Activated naive CD4-positive, alpha-beta T cell treated with anti-CD3 and anti-CD28 coated beads for 36 hours (primary cell): ENCODE measurements at regions of chr14 and their contacts with region 1.

Region 1: GRCh38 chr14:54566410-54567223 is at the start of gene SAMD4A:
- DNase-seq: peak; percentile 75
- H3K4me3 Mint-ChIP-seq: peak within 1 kb of the TSS; percentile 94
- H3K27ac Mint-ChIP-seq: peak within 1 kb of the TSS; percentile 79
- H3K4me1 Mint-ChIP-seq: peaks cover 26% of the 10 kb centered on the region
- H3K27me3 Mint-ChIP-seq: no peaks in the 10 kb centered on the region
- total RNA-seq, gene SAMD4A: 4.7 to 4.9 TPM

Region 2: GRCh38 chr14:54396493-54397335 is 169.9 kb before region 1 on chr14 and contains the start of gene CDKN3:
- CTCF ChIA-PET with region 1: no interaction called
- intact Hi-C with region 1: loop called (anchors 1 kb)
- DNase-seq: peak; percentile 99
- H3K4me3 Mint-ChIP-seq: peak within 1 kb of the TSS; percentile 86
- H3K27ac Mint-ChIP-seq: peak within 1 kb of the TSS; percentile 65
- H3K4me1 Mint-ChIP-seq: peaks cover 8% of the 10 kb centered on the region
- H3K27me3 Mint-ChIP-seq: peaks cover 2% of the 10 kb centered on the region
- total RNA-seq, gene CDKN3: 96.5 to 101 TPM

Region 3: DNA sequence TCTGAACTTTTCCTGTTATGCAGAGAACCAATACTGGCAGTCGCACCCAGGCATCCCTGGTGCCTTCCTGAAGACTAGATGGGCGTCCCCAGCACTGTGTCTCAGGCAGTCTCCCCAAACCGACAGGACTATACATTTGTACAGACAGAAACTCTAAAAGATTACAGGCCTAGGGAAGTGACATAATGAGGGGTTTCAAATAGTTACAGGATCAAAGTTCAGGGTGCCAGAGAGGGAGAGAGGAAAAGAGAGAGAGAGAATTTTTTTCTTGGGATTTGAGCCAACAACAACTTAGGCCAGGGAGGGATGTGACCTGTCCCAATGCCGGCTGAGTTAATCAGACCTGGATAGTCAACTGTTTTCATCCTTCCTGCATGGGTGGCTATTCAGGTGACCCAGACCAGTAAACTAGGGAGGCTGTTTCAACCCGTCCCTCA is 68.5 kb before region 1 on chr14:
- CTCF ChIA-PET with region 1: no interaction called
- intact Hi-C with region 1: no loop called
- DNase-seq: no peak
- H3K4me3 Mint-ChIP-seq: no peak overlapping the region
- H3K27ac Mint-ChIP-seq: no peak overlapping the region
- H3K4me1 Mint-ChIP-seq: peaks cover 2% of the 10 kb centered on the region
- H3K27me3 Mint-ChIP-seq: peaks cover 9% of the 10 kb centered on the region

Region 4: DNA sequence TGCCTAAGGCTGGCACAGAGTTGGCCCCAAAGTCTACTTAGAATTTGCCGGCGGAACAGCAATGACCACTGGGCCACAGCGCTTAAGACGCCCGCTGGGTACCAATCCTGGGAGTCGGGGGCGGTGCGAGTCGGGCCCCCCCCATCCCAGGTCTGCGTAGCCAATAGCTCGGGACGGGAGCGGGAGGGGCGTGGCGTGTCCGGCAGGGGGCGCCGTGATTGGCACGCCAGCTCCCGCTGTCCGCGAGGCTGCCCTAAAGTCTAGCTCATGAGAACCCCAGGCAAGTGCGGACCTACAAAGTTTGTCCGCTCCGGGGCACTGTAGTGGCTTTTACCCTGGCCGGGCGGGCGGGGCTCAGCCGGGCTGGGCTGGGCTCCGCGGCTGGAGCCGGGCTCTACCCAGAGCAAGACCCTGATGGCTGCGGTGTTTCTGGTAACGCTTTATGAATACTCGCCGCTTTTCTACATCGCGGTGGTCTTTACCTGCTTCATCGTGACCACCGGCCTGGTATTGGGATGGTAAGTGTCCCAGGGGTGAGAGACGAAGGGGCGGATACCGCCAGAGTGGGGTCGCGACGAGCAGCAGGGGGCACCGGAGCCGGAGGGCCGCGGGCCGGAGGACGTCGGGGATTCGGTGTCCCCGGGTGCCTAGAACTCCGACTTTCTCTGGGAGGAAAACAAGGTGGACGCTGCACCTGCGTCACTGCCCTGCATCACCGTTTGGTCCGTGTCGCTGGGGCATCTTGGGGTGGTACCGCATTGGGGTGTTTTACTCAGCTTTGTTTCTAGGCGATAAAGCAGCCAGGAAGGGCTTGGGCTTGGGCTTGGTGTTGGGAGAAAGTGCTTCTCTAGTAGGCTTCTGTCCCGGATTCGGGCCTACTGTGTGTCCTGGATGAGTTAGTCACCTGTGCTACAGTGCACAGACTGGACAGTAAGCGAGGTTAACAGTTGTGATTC is 56.8 kb before region 1 on chr14 and contains the start of gene CGRRF1:
- CTCF ChIA-PET with region 1: interaction called, 4 read pairs
- intact Hi-C with region 1: loop called (anchors 1 kb)
- DNase-seq: peak; percentile 98
- H3K4me3 Mint-ChIP-seq: peak within 1 kb of the TSS; percentile 86
- H3K27ac Mint-ChIP-seq: peak within 1 kb of the TSS; percentile 52
- H3K4me1 Mint-ChIP-seq: peaks cover 41% of the 10 kb centered on the region
- H3K27me3 Mint-ChIP-seq: no peaks in the 10 kb centered on the region
- total RNA-seq, gene CGRRF1: 9.2 to 9.7 TPM

Region 5: DNA sequence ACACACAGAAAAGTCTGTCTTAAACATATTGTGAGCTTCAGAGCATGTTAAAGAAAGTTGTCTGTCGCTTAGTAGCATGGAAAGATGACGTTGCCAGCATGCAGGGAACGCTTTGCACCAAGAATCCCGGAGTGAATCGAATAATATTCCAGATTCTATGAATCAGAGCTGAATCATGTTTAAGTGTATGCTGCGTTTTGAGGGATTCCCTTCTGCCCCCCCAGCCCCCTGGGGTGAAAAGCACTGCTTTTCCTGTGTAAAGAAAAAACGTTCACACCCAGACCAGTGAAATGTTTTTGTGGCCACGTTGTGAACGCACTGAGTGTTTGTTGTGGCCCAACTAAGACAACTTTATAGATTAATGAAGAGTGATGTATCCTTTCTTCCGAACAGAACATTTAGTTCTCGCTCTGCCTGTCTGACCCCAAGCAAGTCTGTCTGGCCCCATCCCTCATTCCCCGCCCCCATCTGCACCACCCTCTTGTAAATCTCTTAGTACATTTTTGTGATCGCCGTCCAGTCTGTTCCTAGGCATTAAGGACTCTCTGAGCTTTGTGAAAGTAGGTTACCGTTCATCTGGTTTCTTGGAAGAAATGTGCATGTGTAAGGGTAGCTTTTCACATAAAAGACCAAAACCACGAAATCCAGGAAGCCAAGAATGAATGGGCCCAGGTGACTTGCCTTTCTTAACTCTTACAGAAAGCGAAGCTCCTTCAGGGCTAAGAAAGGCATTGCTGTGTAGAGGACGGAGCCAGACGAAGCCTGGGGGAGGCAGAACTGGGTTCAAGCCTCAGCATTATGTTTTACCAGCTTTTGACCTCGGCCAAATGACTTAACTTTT is 103.3 kb after region 1 on chr14:
- CTCF ChIA-PET with region 1: interaction called, 14 read pairs
- intact Hi-C with region 1: no loop called
- DNase-seq: peak; percentile 51
- H3K4me3 Mint-ChIP-seq: no peak overlapping the region
- H3K27ac Mint-ChIP-seq: no peak overlapping the region
- H3K4me1 Mint-ChIP-seq: peaks cover 30% of the 10 kb centered on the region
- H3K27me3 Mint-ChIP-seq: peaks cover 6% of the 10 kb centered on the region

Region 6: DNA sequence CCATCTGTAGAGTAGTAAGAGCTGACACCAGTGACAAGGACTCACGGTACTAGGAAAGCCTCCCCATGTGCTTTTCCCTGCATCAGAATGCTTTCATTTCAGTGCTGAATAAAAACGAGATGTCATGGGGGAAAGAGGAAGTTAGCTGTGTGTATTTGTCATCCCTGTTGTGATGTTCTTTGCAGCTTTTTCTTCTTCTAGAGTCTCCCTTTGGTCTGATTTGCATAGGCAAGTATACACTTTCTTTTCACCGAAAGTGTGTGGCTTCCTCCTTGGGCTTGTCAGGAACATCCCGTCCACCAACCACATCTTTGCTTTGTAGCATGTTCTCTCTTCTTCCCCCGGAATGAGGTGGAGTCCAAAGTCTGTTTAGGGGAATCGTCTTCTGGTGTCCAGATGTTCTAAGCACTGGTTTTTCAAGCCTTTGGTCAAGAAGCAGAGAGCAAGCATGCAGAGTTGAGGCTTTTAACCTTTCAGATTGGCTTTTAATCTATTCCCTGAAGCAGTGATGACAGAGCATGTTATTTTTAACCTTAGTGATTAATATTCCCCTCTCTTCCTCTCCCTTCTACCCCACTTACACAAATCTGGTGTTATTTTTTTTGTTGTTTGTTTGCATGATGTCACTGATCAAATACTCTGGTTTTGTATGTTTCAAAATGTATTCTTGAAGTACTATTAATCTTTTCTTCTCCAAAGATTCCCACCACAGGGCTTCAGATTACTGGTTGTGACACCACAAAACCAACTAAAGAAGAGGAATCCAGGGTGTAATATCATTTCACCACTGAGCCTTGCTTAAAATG is 163.7 kb after region 1 on chr14:
- CTCF ChIA-PET with region 1: interaction called, 39 read pairs
- intact Hi-C with region 1: loop called (anchors 1 kb)
- DNase-seq: peak; percentile 74
- H3K4me3 Mint-ChIP-seq: peak overlapping the region; percentile 58
- H3K27ac Mint-ChIP-seq: peak overlapping the region; percentile 96
- H3K4me1 Mint-ChIP-seq: peaks cover 33% of the 10 kb centered on the region
- H3K27me3 Mint-ChIP-seq: peaks cover 3% of the 10 kb centered on the region

Region 7: DNA sequence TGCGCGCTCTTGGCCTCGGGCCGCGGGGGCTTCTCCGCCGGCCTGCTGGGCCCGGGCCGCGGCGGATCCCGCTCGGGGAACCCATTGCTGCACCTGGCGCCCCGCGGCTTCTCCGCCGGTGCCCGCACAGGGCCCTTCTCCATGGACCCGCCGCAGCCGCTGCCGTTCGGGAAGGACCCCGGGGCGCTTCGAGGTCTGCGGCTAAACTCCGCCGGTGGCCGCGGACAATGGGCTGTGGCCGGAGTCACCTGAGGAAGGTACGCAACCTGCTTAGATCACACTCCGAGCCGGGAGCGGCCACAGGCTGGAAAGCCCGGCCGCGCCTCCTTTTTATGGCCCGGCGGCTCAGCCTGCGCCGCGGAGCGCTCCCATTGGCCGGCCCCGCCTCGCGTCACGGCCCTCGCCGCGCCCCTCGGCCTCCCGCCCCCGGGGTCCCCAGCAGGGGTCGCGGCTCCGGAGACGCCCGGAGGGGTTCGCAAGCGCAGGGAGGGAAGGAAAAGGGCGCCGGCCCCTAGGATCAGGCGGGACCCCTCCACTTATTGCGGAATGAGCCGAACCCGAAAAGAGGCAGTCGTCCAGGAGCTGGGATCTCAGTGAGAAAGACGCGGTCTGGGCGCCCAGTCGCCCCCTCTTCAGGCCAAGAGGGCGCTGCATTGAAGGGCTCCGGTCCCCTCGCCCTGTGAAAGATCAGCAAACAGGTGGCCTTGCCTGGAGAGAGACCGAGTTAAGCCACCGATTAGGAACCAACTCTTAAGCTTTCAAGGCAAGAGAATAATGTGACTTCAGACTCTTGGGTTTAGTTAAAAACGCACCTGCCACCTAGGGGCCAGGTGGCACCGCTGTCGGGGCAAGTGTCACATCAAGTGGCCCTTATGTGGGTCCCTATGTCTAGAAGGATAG is 336.2 kb after region 1 on chr14 and contains the start of gene GCH1:
- CTCF ChIA-PET with region 1: no interaction called
- intact Hi-C with region 1: loop called (anchors 1 kb)
- DNase-seq: peak; percentile 72
- H3K4me3 Mint-ChIP-seq: peak within 1 kb of the TSS; percentile 86
- H3K27ac Mint-ChIP-seq: peak within 1 kb of the TSS; percentile 88
- H3K4me1 Mint-ChIP-seq: peaks cover 20% of the 10 kb centered on the region
- H3K27me3 Mint-ChIP-seq: no peaks in the 10 kb centered on the region
- total RNA-seq, gene GCH1: 56.8 to 57.3 TPM